ENCODE measurements at regions of chr2 and their contacts with region 1.

Region 1: DNA sequence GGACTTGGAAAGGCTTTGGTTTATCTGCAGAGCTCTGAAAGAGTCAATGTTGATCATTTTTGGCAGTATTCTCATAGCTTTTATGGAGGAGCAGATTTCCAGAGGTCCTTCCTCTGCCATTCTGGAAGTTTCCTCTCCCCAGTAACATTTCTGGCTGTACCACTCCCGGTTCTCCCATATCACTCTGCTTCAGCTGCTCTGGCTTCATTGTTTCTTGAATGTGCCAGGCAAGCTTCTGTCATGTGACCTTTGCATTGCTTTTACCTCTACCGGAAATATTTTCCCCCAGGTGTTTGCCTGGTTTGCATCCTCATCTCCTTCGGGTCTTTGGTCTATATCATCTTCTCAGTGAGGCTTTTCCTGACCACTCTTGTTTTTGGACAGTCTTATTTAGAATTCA is 12.4 kb downstream of the PCYOX1 start:
- DNase-seq: no peak
- ATAC-seq: no peak
- H3K4me3 ChIP-seq: no peak overlapping the region
- H3K4me3 Mint-ChIP-seq: no peak overlapping the region
- H3K27ac ChIP-seq: no peak overlapping the region
- H3K27ac Mint-ChIP-seq: no peak overlapping the region
- H3K4me1 ChIP-seq: peaks cover 0 to 4% of the 10 kb centered on the region in 2 experiments
- H3K4me1 Mint-ChIP-seq: peaks cover 10 to 11% (median 11%) of the 10 kb centered on the region in 3 donors
- H3K27me3 ChIP-seq: no peaks in the 10 kb centered on the region
- H3K27me3 Mint-ChIP-seq: no peaks in the 10 kb centered on the region

Region 2: GRCh38 chr2:70580352-70580751 is 310.0 kb after region 1 on chr2:
- CTCF ChIA-PET with region 1: no interaction called
- POLR2A ChIA-PET with region 1: interaction called in 1 of 2 experiments, 11 read pairs
- DNase-seq: no peak
- ATAC-seq: no peak
- H3K4me3 ChIP-seq: no peak overlapping the region
- H3K4me3 Mint-ChIP-seq: no peak overlapping the region
- H3K27ac ChIP-seq: no peak overlapping the region
- H3K27ac Mint-ChIP-seq: no peak overlapping the region
- H3K4me1 ChIP-seq: peaks cover 0 to 2% of the 10 kb centered on the region in 2 experiments
- H3K4me1 Mint-ChIP-seq: no peaks in the 10 kb centered on the region
- H3K27me3 ChIP-seq: no peaks in the 10 kb centered on the region
- H3K27me3 Mint-ChIP-seq: peaks cover 1 to 13% of the 10 kb centered on the region in 2 donors